Mucosa of descending colon (tissue), 3 donors: ENCODE measurements at regions of chr6 and their contacts with region 1.

Region 1: GRCh38 chr6:31399589-31400466 is 3.6 kb upstream of the MICA start:
- DNase-seq: peak; percentile 93 to 94 (median 94)
- ATAC-seq: peak; percentile 76
- H3K4me3 ChIP-seq: peak overlapping the region; percentile 63
- H3K4me1 ChIP-seq: peaks cover 41% of the 10 kb centered on the region
- CTCF ChIP-seq: peak; percentile 86

Region 2: DNA sequence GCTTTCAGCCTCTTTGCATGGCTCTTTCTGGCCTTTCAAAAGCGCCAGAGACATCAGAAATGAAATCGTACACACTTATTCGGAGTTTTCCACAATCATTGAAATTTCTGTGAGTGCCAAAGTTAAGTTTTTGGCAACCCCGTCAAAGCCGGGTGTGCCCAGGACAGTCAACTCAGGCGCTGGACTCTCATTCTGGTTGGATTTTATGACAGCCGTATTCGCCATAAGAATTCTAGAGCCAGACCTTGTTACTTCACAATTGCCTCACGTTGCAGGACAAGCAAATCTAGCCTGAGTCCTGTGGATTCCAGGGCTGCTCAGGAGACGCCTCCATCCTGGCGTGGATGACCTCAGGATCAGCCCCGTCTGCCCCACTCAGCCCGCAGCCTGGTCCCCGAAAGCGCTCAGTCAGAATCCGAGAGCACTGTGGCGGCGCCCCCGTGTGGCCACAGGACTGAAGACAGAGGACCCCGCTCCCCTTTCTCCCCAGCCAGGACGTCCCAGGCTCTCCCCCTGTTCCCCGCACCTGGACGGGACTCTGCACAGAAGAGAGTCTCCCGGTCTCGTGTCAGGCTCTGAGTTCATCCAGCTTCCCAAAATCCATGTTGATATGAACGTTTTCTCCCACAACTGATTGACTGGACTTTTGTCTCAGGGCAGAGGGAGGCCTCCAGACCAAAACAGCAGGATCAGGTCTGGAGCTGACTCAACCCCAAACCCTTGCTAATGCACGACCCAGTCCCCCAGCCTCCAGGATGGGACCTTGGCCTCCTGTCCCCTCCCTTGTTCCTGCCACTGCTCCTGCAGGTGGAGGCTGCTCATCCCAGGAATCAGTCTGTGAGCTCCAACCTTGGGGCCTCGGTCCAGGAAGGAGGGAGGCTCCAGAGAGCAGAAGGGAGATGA is 41.8 kb after region 1 on chr6:
- intact Hi-C with region 1: loop called (anchors 5 kb)
- DNase-seq: peak; percentile 75 to 93 (median 87)
- ATAC-seq: peak; percentile 96
- H3K4me3 ChIP-seq: no peak overlapping the region
- H3K4me1 ChIP-seq: no peaks in the 10 kb centered on the region
- CTCF ChIP-seq: peak; percentile 74

Region 3: DNA sequence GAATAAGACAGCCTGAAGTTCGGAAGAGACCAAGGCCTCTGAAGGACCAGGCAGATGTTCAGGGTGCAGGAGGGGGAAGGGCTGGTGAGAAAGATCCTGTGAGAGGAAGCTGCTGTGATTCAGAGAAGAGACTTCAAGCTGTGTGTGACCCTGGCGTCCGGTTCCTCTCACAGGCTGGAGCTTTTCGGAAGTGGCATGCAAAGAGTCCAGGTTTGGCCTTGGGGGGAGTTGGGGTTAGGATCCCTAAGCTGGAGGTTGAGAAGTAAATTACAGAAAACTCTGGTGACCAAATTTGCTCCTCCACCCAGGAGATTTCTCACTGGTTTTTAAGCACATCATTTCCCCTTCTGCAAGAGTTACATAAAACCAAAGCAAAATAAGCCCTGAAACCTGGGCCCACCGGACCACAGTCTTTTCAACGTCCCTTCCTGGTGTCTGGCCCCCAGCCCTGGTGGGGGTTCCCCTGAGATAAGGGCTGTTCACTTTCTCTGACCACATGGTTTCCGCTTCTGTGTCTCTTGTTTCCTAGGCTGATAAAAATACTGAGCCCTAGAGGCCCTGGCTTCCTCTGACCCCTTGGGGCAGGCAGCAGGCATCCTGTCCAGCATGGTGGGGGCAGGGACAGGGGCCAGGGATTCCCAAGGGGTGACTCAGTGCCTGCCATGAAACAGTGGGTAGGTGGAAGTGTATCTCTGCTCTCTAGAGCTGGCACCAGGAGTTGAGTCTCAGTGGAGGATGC is 160.3 kb after region 1 on chr6:
- intact Hi-C with region 1: no loop called
- DNase-seq: peak; percentile 47 to 80 (median 56)
- ATAC-seq: peak; percentile 76
- H3K4me3 ChIP-seq: no peak overlapping the region
- H3K4me1 ChIP-seq: peaks cover 3% of the 10 kb centered on the region
- CTCF ChIP-seq: no peak